Spleen (tissue), 13 donors: ENCODE measurements at regions of chr2 and their contacts with region 1.

Region 1: DNA sequence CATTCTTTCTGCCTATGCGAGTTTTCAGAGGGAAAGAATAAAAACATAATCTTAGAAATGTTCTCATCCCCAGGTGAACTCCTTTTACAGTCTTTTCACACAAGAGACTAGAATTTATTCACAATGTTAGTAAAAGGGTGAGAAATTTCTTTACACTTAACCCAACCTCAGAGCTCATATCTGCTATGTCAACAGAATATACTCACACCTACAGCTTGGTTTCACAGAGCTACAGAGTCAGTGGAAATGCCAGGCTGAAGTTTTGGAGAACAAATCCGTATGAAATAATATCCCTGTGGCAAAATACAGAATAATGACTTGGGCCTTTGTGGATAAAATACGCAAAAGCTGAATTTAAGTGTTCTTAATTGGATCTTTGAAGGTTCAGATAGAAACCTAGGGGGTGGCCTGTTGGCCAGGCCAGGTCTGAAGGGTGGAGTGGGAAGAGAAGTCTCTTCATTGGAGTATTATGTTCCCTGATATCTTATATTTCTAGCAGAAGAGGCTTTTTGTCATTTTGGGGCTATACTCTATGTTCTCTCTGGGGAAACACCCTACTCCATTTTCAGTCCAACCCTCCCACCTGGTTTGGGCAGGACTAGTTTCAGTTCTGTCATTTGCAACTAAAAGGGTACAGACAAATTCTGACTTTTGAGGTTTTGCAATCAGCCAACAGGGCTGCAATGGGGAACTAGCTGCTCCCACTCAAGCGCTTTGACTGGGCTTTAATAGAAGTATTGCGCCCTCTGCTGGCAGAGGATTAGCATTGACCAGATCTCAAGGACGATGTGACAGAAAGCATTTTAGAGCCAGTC is 25.7 kb downstream of the FBXO48 start:
- DNase-seq: peak; percentile 87
- H3K4me3 ChIP-seq: no peak overlapping the region
- H3K27ac ChIP-seq: peak overlapping the region; percentile 5 to 85 (median 51)
- H3K4me1 ChIP-seq: peaks cover 4 to 38% (median 24%) of the 10 kb centered on the region in 6 donors
- H3K27me3 ChIP-seq: no peaks in the 10 kb centered on the region
- CTCF ChIP-seq: peak; percentile 85 to 98 (median 93)
- POLR2A ChIP-seq: no peak

Region 2: GRCh38 chr2:68282811-68283418 is 158.5 kb before region 1 on chr2:
- intact Hi-C with region 1: loop called (anchors 10 kb)
- DNase-seq: no peak
- H3K4me3 ChIP-seq: no peak overlapping the region
- H3K27ac ChIP-seq: no peak overlapping the region
- H3K4me1 ChIP-seq: peaks cover 0 to 23% (median 2%) of the 10 kb centered on the region in 6 donors
- H3K27me3 ChIP-seq: no peaks in the 10 kb centered on the region
- CTCF ChIP-seq: peak in 10 of 11 experiments; percentile 30 to 76 (median 61)
- POLR2A ChIP-seq: no peak

Region 3: DNA sequence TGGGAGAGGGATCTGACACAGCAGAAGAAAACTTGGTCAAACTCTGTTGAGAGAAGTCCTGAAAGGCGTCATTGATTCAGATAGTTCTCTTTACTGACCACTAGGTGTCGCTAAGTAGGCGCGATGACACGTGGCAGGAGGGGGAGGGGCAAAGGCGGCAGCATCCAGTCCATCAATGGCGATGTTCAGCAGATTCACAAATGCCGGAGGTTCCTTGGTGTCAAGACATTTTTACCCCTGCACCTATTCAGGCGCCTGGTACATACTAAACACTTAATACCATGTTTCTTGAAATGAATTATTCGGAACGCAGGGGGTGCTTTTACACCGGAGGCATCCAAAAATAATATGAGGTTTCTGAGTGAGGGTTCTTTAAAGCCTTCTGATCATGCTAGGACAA is 79.3 kb before region 1 on chr2:
- intact Hi-C with region 1: loop called (anchors 5 kb)
- DNase-seq: peak; percentile 94
- H3K4me3 ChIP-seq: peak overlapping the region in 5 of 8 donors; percentile 6 to 62 (median 18)
- H3K27ac ChIP-seq: peak overlapping the region; percentile 29 to 95 (median 83)
- H3K4me1 ChIP-seq: peaks cover 8 to 56% (median 38%) of the 10 kb centered on the region in 6 donors
- H3K27me3 ChIP-seq: no peaks in the 10 kb centered on the region
- CTCF ChIP-seq: peak; percentile 71 to 94 (median 89)
- POLR2A ChIP-seq: no peak

Region 4: GRCh38 chr2:68537809-68538208 is 96.4 kb after region 1 on chr2:
- intact Hi-C with region 1: no loop called
- DNase-seq: no peak
- H3K4me3 ChIP-seq: no peak overlapping the region
- H3K27ac ChIP-seq: peak overlapping the region in 1 of 8 donors; percentile 39
- H3K4me1 ChIP-seq: no peaks in the 10 kb centered on the region
- H3K27me3 ChIP-seq: no peaks in the 10 kb centered on the region
- CTCF ChIP-seq: no peak
- POLR2A ChIP-seq: no peak